Activated naive CD4-positive, alpha-beta T cell treated with anti-CD3 and anti-CD28 coated beads, Interleukin-2, amount 10 ng/mL, durations not matched to agents 7 days and 5 days (primary cell): ENCODE measurements at regions of chr2 and their contacts with region 1.

Region 1: GRCh38 chr2:236512902-236513435 is 56.7 kb upstream of the ACKR3 start:
- DNase-seq: peak; percentile 83
- H3K4me3 Mint-ChIP-seq: no peak overlapping the region
- H3K27ac Mint-ChIP-seq: no peak overlapping the region
- H3K4me1 Mint-ChIP-seq: peaks cover 4% of the 10 kb centered on the region
- H3K27me3 Mint-ChIP-seq: peaks cover 34% of the 10 kb centered on the region

Region 2: GRCh38 chr2:236526455-236527158 is 13.6 kb after region 1 on chr2:
- CTCF ChIA-PET with region 1: interaction called, 18 read pairs
- DNase-seq: no peak
- H3K4me3 Mint-ChIP-seq: no peak overlapping the region
- H3K27ac Mint-ChIP-seq: no peak overlapping the region
- H3K4me1 Mint-ChIP-seq: peaks cover under 1% of the 10 kb centered on the region
- H3K27me3 Mint-ChIP-seq: peaks cover 38% of the 10 kb centered on the region

Region 3: GRCh38 chr2:236536727-236537398 is 23.9 kb after region 1 on chr2:
- CTCF ChIA-PET with region 1: interaction called, 22 read pairs
- DNase-seq: peak; percentile 75
- H3K4me3 Mint-ChIP-seq: peak overlapping the region; percentile 99
- H3K27ac Mint-ChIP-seq: peak overlapping the region; percentile 94
- H3K4me1 Mint-ChIP-seq: peaks cover 57% of the 10 kb centered on the region
- H3K27me3 Mint-ChIP-seq: peaks cover 8% of the 10 kb centered on the region

Region 4: GRCh38 chr2:236550701-236551465 is 37.9 kb after region 1 on chr2:
- CTCF ChIA-PET with region 1: interaction called, 30 read pairs
- DNase-seq: no peak
- H3K4me3 Mint-ChIP-seq: no peak overlapping the region
- H3K27ac Mint-ChIP-seq: peak overlapping the region; percentile 37
- H3K4me1 Mint-ChIP-seq: peaks cover 99% of the 10 kb centered on the region
- H3K27me3 Mint-ChIP-seq: no peaks in the 10 kb centered on the region

Region 5: DNA sequence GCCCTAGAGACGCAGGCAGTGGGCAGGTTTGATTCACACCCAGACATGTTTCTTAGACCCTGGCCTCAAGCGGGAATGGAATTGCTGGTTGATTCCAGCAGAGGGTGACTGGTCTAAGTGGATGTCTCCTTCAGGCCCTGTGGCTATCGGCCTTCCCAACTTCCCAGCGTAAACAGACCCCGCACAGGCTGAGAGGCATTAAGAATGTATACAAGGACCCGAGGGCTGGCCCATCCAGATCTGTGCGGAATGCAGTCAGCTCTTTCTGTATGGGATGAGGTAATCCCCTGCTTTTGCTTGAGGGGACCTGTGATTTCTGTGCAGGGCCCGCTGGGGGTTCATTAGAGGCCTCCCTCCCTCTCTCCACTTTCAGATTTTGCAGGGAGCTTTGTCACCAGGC is 63.1 kb after region 1 on chr2:
- CTCF ChIA-PET with region 1: interaction called, 214 read pairs
- DNase-seq: no peak
- H3K4me3 Mint-ChIP-seq: no peak overlapping the region
- H3K27ac Mint-ChIP-seq: no peak overlapping the region
- H3K4me1 Mint-ChIP-seq: no peaks in the 10 kb centered on the region
- H3K27me3 Mint-ChIP-seq: no peaks in the 10 kb centered on the region